HepG2 (cell line): ENCODE measurements at regions of chr4 and their contacts with region 1.

Region 1: DNA sequence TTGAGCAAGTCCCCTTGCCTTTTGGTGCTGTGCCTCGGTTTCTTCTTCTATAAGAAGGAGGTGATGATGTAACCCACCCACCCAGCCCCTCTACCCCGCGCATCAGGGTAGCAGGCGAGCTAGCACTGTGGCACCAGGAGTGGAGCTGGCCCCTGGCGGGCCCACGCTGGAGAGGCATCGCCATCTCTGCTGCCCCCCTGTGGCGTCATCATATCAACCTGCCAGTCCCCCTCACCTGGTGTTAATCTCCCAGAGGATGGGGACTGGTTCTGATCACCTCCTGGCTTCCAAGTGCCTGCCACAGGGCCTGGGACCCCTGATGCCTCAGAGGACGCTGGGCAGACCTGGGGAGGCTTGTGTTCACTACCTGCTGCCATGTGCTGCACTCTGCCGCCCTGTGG is 6.3 kb upstream of the SORCS2 start:
- DNase-seq: peak; percentile 24
- ATAC-seq: peak; percentile 91
- H3K4me3 ChIP-seq: no peak overlapping the region
- H3K27ac ChIP-seq: no peak overlapping the region
- H3K4me1 ChIP-seq: no peaks in the 10 kb centered on the region
- H3K27me3 ChIP-seq: peaks cover 8 to 42% of the 10 kb centered on the region in 2 experiments
- CTCF ChIP-seq: peak; percentile 79
- EP300 ChIP-seq: no peak
- POLR2A ChIP-seq: no peak
- RAD21 ChIP-seq: peak; percentile 48; the same call in 1 of the 2 replicates

Region 2: DNA sequence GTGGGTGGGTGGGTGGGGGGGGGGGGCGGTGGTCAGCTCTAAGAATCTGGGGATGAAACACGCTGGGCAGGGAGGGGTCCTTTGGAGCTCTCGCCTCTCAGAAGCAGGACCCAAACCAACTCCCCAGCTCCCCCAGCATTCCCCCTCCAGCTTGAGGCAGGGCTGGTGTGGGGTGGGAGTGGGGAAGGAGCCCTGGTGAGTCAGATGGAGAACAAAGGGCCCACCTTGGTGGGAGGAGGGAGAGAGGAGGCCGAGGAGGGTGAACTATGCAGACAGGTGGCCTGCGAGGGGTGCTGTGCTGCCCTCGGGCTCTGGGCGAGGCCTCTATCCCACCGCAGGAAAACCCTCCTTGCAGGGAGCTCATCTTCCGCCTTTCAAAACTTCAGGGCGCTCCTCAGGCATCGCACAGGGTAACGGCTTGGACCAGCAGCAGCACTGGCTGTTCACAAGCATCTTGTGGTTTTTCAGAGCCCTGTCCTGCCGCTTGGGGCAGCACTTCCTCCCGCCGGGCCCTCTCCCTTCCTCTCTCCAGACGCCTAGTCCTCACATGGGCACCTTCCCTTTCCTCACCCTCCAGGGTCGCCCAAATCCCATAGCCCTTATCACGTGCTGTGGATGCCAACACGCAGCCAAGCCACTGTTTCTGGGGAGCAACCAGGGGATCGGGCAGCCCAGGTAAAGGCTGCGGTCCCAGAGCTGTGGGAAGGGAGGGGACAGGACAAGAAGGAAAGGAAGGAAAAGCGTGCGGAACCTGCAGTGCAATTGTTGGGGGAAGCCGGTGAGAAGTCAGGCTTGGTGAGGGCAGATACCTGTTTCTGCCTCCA is 84.2 kb before region 1 on chr4:
- CTCF ChIA-PET with region 1: interaction called, 7 read pairs
- POLR2A ChIA-PET with region 1: no interaction called
- in situ Hi-C with region 1: no loop called
- intact Hi-C with region 1: loop called (anchors 5 kb)
- DNase-seq: peak; percentile 52
- ATAC-seq: peak; percentile 78
- H3K4me3 ChIP-seq: peak overlapping the region; percentile 80 to 88 (median 82); a peak in 5 of 6 replicates
- H3K27ac ChIP-seq: no peak overlapping the region
- H3K4me1 ChIP-seq: peaks cover 40% of the 10 kb centered on the region
- H3K27me3 ChIP-seq: peaks cover 0 to 12% of the 10 kb centered on the region in 2 experiments; a peak in 2 of 5 replicates
- CTCF ChIP-seq: peak; percentile 91
- EP300 ChIP-seq: no peak
- POLR2A ChIP-seq: no peak
- RAD21 ChIP-seq: peak; percentile 55; the same call in 1 of the 2 replicates

Region 3: DNA sequence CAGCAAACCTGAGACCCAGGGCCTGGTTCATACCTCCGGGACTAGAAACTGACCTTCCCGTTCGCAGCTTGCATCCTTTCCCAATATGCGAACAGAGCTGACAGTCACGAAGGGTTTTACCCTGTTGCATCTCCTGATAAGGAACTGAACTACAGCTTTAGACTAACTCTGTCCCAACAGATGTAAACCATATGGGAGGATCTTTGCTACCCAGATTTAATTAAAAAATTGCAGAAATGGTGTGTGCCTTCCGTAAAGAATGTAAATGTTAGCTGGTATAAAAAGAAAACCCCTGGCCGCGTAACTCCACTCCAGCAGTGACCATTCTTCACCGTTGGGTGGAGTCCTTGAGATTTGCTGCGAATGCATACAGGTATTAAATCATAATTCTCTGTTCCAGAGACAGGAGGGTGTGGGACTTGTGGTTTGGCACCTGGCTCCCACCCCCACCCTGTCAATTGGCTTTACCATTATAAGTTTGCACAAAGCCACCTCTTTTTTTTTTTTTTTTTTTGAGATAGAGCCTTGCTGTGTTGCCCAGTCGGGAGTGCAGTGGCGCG is 34.3 kb before region 1 on chr4:
- CTCF ChIA-PET with region 1: no interaction called
- POLR2A ChIA-PET with region 1: no interaction called
- in situ Hi-C with region 1: no loop called
- intact Hi-C with region 1: loop called (anchors 5 kb)
- DNase-seq: no peak
- ATAC-seq: no peak
- H3K4me3 ChIP-seq: no peak overlapping the region
- H3K27ac ChIP-seq: no peak overlapping the region
- H3K4me1 ChIP-seq: peaks cover 30% of the 10 kb centered on the region
- H3K27me3 ChIP-seq: peaks cover 14 to 70% of the 10 kb centered on the region in 2 experiments
- CTCF ChIP-seq: peak; percentile 48
- EP300 ChIP-seq: no peak
- POLR2A ChIP-seq: no peak
- RAD21 ChIP-seq: 0 out of 2 replicates have a peak, but pooled peaks have one; percentile 12